ENCODE measurements at regions of chr6 and their contacts with region 1.

Region 1: DNA sequence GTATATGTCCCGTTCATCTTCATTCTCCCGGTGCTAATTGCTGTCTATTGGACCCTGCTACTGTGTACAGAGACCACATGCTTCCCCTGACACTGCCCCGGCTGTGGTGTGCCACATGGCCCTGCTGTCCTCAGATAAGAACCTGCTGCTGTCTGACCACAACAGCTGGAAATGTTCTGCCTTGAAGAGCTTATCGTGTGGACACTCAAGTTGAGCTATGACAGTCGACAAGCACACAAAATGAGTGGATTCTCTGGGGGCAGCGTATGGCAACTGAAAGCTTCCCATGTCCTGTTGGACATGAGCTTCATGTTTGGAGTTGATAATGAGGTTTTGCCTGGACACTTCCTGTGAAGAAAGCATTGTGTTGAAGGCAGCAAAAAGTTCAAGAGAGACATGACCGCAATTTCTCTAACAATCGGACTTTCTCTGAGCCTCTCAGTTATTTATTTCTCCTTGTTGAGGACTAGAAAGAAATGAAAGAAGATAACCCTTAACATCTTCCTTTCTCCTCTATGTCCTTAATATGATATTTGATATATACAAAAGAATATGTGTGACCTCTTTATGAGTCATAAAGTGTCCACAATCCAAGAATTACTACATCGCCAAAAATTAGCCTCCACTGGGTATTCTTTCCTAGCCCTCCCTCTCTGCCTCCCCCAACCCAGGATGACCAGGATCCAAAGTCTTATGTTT is 187.1 kb upstream of the TCF21 start:
- DNase-seq: no peak
- ATAC-seq: no peak
- H3K4me3 Mint-ChIP-seq: no peak overlapping the region
- H3K27ac Mint-ChIP-seq: no peak overlapping the region
- H3K4me1 Mint-ChIP-seq: no peaks in the 10 kb centered on the region
- H3K27me3 Mint-ChIP-seq: peaks cover 10% of the 10 kb centered on the region

Region 2: GRCh38 chr6:133715270-133715669 is 13.5 kb after region 1 on chr6:
- CTCF ChIA-PET with region 1: no interaction called
- POLR2A ChIA-PET with region 1: no interaction called
- intact Hi-C with region 1: loop called in 1 of 2 experiments (anchors 2 kb)
- DNase-seq: no peak
- ATAC-seq: no peak
- H3K4me3 Mint-ChIP-seq: no peak overlapping the region
- H3K27ac Mint-ChIP-seq: no peak overlapping the region
- H3K4me1 Mint-ChIP-seq: no peaks in the 10 kb centered on the region
- H3K27me3 Mint-ChIP-seq: peaks cover 10% of the 10 kb centered on the region